Testis (tissue), 5 donors: ENCODE measurements at regions of chr3 and their contacts with region 1.

Region 1: DNA sequence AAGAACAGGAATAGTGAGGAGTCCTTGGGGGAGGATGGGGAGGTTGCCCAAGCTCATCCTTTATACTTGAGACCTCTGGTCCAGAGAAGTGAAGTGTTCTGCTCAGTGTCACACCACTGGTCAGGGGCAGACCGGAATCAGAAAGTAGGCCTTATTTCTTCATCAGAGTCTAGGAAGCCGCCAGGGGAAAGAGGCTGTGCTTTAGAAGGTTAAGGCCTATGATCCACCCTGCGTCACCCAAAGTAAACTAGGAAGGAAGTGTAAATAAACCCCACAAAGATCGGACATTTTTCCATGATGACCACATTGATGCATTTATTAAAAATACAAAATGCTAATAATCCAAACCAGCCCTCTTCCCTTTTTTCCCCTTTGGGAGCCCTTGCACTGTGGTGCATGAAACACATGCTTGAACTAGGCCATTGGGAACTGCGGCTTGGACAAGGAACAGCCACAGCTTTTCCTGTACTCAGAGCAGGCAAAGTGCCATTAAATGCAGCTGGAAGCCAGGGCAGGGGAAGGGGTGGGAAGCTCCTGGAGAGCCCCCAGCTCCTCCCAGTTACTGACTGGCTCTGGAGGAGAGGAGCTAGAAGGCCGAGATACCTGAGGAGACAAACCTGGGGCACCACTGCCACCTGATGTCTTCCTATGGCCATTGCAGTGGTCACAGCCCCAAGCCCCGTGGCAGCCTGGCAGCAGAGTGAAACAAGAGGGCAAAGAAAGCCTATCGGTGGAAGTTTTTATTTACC is 37.0 kb downstream of the CDC25A start:
- DNase-seq: peak; percentile 89
- H3K4me3 ChIP-seq: no peak overlapping the region
- H3K27ac ChIP-seq: peak overlapping the region in 1 of 2 donors; percentile 44
- H3K4me1 ChIP-seq: peaks cover 9% of the 10 kb centered on the region
- H3K27me3 ChIP-seq: no peaks in the 10 kb centered on the region
- CTCF ChIP-seq: peak; percentile 69 to 78 (median 71)
- POLR2A ChIP-seq: no peak

Region 2: DNA sequence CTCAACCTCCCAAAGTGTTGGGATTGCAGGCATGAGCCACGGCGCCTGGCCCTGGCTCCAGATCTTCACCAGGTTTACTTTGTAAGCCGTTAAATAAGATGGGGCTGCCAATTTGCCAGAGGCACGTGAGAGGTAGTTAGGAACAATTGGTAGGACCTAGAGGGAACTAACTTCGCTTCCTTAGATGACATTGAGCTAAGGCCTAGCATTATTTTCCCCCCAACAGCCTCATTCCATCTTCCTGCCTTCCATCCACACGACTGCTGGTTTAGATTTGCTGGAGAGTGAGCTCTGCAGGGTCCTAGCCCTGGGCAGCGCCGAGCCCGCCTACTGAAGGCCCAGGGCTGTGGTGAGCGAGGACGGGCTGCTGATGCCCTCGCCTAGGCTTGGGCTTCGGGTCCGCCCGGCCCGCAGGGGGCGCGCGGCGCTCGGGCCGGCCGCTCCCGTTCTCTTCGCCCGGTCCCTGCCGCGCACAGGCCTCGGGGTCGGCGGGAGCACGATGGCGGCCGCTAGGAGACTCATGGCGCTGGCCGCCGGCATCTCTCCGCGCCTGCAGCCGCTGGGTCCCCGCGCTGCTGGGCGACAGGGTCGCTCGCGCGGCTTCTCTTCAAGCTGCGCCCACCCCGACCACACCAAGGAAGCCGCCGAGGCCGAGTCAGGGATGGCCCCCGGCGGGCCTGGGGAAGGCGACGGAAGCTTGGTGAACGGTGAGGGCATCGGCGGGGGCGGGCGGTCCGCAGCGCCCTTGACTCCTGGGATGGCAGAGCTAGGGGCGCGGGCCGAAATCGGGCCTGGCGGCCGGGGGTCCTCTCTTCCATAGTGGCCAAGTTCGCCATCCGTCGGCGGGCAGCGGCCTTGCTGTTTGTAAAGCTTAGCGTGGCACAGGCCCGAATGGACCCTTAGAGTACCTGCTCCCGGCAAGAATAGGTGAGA is 326.4 kb before region 1 on chr3:
- intact Hi-C with region 1: loop called (anchors 10 kb)
- DNase-seq: peak; percentile 84
- H3K4me3 ChIP-seq: peak overlapping the region; percentile 94 to 97
- H3K27ac ChIP-seq: peak overlapping the region; percentile 76 to 87
- H3K4me1 ChIP-seq: peaks cover 11% of the 10 kb centered on the region
- H3K27me3 ChIP-seq: no peaks in the 10 kb centered on the region
- CTCF ChIP-seq: peak; percentile 76 to 87 (median 82)
- POLR2A ChIP-seq: no peak

Region 3: GRCh38 chr3:47849699-47850563 is 301.3 kb before region 1 on chr3:
- intact Hi-C with region 1: loop called (anchors 10 kb)
- DNase-seq: no peak
- H3K4me3 ChIP-seq: no peak overlapping the region
- H3K27ac ChIP-seq: no peak overlapping the region
- H3K4me1 ChIP-seq: peaks cover 10% of the 10 kb centered on the region
- H3K27me3 ChIP-seq: no peaks in the 10 kb centered on the region
- CTCF ChIP-seq: peak; percentile 14 to 39 (median 34)
- POLR2A ChIP-seq: no peak

Region 4: GRCh38 chr3:47954567-47954966 is 196.7 kb before region 1 on chr3:
- intact Hi-C with region 1: no loop called
- DNase-seq: peak; percentile 37
- H3K4me3 ChIP-seq: no peak overlapping the region
- H3K27ac ChIP-seq: peak overlapping the region in 1 of 2 donors; percentile 24
- H3K4me1 ChIP-seq: peaks cover 10% of the 10 kb centered on the region
- H3K27me3 ChIP-seq: no peaks in the 10 kb centered on the region
- CTCF ChIP-seq: no peak
- POLR2A ChIP-seq: no peak

Region 5: GRCh38 chr3:48456456-48456855 is 305.2 kb after region 1 on chr3:
- intact Hi-C with region 1: no loop called
- DNase-seq: no peak
- H3K4me3 ChIP-seq: no peak overlapping the region
- H3K27ac ChIP-seq: no peak overlapping the region
- H3K4me1 ChIP-seq: no peaks in the 10 kb centered on the region
- H3K27me3 ChIP-seq: no peaks in the 10 kb centered on the region
- CTCF ChIP-seq: no peak
- POLR2A ChIP-seq: no peak